ENCODE measurements at regions of chr15 and their contacts with region 1.

Region 1: DNA sequence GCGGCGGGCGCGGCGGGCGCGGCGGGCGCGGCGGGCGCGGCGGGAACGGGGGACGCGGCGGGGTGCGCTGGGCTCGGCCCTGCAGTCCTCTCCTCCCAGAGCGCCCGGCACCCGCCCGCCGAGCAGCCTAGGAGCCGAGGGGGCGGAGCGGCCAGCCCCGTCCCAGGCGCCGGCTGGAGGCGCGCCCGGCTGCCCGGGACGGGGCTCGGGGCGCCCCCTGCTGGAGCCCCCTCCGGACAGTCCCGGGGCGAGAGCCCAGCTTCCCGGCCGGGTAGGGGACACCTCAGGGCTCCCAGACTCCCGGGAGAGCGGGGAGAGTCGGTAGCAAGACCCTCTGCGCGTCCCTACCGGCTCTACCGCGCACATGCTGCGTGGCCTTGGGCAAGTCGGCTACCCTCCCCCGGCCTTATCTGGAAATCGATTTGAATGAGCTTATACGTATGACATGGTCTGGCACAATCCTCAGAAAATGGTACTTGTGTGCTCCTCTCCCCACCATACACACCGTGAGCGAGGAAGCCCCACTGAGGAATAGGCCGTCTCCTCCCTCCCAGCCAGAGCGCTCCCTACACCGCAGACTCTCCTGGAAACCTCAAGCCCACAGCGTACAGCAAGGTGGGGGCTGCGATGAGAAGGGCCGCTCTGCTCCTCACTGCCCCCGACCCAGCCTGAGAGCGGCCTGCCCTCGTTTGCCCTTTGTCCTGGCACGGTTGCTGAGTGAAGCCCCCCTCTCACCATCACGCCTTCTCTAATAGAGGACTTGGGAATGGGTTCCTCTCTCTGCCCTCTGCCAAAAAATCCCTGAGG is at the start of gene DAPK2:
- DNase-seq: peak; percentile 97
- H3K4me3 ChIP-seq: peak within 1 kb of the TSS; percentile 61 to 64
- H3K27ac ChIP-seq: no peak within 1 kb of the TSS; a peak in 1 of 4 replicates
- H3K4me1 ChIP-seq: peaks cover 0 to 13% of the 10 kb centered on the region in 2 experiments; a peak in 1 of 4 replicates
- H3K27me3 ChIP-seq: no peaks in the 10 kb centered on the region
- CTCF ChIP-seq: peak; percentile 77
- EP300 ChIP-seq: no peak
- RAD21 ChIP-seq: peak; percentile 50
- polyA plus RNA-seq, gene DAPK2: 1.2 and 1.4 TPM in 2 replicates

Region 2: DNA sequence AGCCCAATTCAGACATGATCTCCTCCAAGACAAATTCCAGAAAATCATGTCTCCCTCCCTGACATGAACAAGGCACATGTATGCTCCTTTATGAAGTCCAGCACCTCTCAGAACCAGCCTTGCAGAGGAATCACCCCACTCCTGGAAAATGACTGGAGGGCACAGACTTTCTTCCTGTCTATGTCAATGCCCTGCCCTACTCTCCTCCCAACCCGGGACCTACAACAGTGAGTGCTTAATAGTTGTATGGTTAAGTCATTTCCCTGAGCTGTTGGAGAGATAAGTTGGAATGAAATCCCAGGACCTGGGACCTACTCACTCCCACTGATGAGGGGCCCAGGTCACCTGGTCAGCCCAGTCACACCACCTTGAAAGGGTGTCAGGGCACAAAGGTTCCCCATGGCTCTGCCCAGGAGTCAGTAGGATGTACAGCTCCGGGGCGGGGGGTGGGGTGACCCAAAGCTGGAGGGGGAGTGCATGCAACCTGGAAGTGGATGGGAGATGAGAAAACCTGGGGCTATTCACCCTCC is 132.7 kb before region 1 on chr15:
- CTCF ChIA-PET with region 1: interaction called, 10 read pairs
- POLR2A ChIA-PET with region 1: no interaction called
- DNase-seq: no peak
- H3K4me3 ChIP-seq: no peak overlapping the region
- H3K27ac ChIP-seq: no peak overlapping the region
- H3K4me1 ChIP-seq: peaks cover 18 to 29% of the 10 kb centered on the region in 2 experiments; a peak in 3 of 4 replicates
- H3K27me3 ChIP-seq: no peaks in the 10 kb centered on the region
- CTCF ChIP-seq: no peak
- EP300 ChIP-seq: no peak
- RAD21 ChIP-seq: no peak

Measured in SK-N-SH (cell line).